Activated naive CD4-positive, alpha-beta T cell treated with anti-CD3 and anti-CD28 coated beads for 36 hours (primary cell): ENCODE measurements at regions of chr2 and their contacts with region 1.

Region 1: GRCh38 chr2:113889471-113890252 is at the start of gene ACTR3:
- DNase-seq: peak; percentile 99
- H3K4me3 Mint-ChIP-seq: peak within 1 kb of the TSS; percentile 95
- H3K27ac Mint-ChIP-seq: peak within 1 kb of the TSS; percentile 98
- H3K4me1 Mint-ChIP-seq: peaks cover 64% of the 10 kb centered on the region
- H3K27me3 Mint-ChIP-seq: no peaks in the 10 kb centered on the region
- total RNA-seq, gene ACTR3: 516 to 536 TPM

Region 2: DNA sequence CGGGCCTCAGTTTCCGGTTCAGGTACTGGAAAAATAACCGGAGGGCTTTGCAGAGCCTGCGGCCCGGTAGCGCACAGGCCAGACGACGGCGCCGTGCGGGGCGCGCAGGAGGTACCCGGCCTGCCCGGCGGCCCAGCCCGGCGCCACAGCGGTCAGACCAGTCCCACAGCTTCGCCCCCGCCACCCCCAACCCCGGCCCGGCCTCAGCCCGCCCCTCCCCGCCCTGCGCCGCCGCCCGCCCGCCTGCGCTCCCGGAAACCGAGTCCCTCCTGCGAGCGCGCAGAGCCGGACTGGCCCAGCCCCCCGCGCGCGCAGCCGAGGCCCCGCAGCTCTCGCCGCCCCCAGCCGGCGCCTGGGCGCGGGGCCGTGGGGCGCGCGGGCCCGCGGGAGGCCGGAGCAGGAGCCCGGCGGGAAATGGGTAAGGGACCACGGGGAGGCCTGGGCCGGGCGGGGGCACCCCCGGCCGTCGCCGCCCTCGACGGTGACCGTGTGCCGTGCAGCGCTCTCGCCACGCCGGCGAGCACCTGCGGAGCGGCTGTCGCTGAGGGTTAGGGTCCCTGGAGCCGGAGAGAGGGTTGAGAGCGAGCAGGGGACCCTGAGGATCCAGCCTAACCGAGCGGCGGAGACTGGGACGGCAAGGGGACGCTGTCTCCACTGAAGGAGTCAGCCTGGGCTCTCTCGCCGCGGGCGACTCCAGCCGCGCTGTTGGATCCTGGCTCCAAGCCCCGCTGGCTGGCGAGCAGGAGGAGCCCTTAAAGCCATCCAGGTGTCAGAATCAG is 732.4 kb before region 1 on chr2:
- CTCF ChIA-PET with region 1: no interaction called
- intact Hi-C with region 1: no loop called
- DNase-seq: peak; percentile 67
- H3K4me3 Mint-ChIP-seq: peak overlapping the region; percentile 82
- H3K27ac Mint-ChIP-seq: peak overlapping the region; percentile 86
- H3K4me1 Mint-ChIP-seq: peaks cover 23% of the 10 kb centered on the region
- H3K27me3 Mint-ChIP-seq: no peaks in the 10 kb centered on the region

Region 3: DNA sequence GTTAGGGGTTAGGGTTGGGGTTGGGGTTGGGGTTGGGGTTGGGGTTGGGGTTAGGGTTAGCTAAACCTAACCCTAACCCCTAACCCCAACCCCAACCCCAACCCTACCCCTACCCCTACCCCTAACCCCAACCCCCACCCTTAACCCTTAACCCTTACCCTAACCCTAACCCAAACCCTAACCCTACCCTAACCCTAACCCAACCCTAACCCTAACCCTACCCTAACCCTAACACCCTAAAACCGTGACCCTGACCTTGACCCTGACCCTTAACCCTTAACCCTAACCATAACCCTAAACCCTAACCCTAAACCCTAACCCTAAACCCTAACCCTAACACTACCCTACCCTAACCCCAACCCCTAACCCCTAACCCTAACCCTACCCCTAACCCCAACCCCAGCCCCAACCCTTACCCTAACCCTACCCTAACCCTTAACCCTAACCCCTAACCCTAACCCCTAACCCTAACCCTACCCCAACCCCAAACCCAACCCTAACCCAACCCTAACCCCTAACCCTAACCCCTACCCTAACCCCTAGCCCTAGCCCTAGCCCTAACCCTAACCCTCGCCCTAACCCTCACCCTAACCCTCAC is 286.7 kb before region 1 on chr2:
- CTCF ChIA-PET with region 1: interaction called, 3 read pairs
- intact Hi-C with region 1: loop called (anchors 10 kb)
- DNase-seq: no peak
- H3K4me3 Mint-ChIP-seq: peak overlapping the region; percentile 93
- H3K27ac Mint-ChIP-seq: peak overlapping the region; percentile 84
- H3K4me1 Mint-ChIP-seq: peaks cover 9% of the 10 kb centered on the region
- H3K27me3 Mint-ChIP-seq: no peaks in the 10 kb centered on the region

Region 4: GRCh38 chr2:113756355-113757137 is 133.1 kb before region 1 on chr2 and contains the start of gene SLC35F5:
- CTCF ChIA-PET with region 1: interaction called, 3 read pairs
- intact Hi-C with region 1: loop called (anchors 1 kb)
- DNase-seq: peak; percentile 89
- H3K4me3 Mint-ChIP-seq: peak within 1 kb of the TSS; percentile 98
- H3K27ac Mint-ChIP-seq: peak within 1 kb of the TSS; percentile 99
- H3K4me1 Mint-ChIP-seq: peaks cover 17% of the 10 kb centered on the region
- H3K27me3 Mint-ChIP-seq: no peaks in the 10 kb centered on the region
- total RNA-seq, gene SLC35F5: 12.1 to 13.7 TPM

Region 5: DNA sequence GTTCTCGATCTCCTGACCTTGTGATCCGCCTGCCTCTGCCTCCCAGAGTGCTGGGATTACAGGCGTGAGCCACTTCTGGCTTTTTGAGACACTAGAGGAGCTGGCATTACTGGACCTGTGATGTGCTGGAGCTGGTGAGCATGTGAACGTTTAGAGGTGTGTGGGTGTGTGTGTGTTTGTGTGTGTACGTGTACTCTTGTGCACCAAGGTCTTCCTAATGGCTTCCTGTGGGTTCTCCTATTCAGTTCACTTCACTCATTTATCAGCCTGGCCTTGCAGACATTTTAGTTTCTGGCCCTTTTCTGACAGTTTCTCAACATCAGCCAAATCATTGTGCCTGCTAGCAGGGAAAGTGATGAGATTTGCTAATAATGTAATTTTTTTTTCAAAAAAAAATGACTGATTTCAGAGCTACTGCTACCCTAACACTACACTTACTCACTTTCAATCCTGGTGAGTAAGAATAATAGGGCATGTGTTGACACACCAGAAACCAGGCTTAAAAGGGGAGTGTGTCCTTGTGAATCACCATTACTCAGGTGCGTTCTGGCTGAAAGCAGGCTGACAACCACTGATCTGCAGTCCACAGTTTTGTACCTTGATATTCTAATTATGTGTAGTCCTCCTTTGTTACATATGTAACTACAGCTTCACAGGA is 40.8 kb before region 1 on chr2:
- CTCF ChIA-PET with region 1: no interaction called
- intact Hi-C with region 1: loop called (anchors 1 kb)
- DNase-seq: peak; percentile 73
- H3K4me3 Mint-ChIP-seq: no peak overlapping the region
- H3K27ac Mint-ChIP-seq: peak overlapping the region; percentile 88
- H3K4me1 Mint-ChIP-seq: peaks cover 22% of the 10 kb centered on the region
- H3K27me3 Mint-ChIP-seq: no peaks in the 10 kb centered on the region

Region 6: GRCh38 chr2:113901943-113902342 is 12.3 kb after region 1 on chr2:
- CTCF ChIA-PET with region 1: interaction called, 5 read pairs
- intact Hi-C with region 1: loop called (anchors 1 kb)
- DNase-seq: no peak
- H3K4me3 Mint-ChIP-seq: no peak overlapping the region
- H3K27ac Mint-ChIP-seq: peak overlapping the region; percentile 67
- H3K4me1 Mint-ChIP-seq: peaks cover 91% of the 10 kb centered on the region
- H3K27me3 Mint-ChIP-seq: no peaks in the 10 kb centered on the region

Region 7: DNA sequence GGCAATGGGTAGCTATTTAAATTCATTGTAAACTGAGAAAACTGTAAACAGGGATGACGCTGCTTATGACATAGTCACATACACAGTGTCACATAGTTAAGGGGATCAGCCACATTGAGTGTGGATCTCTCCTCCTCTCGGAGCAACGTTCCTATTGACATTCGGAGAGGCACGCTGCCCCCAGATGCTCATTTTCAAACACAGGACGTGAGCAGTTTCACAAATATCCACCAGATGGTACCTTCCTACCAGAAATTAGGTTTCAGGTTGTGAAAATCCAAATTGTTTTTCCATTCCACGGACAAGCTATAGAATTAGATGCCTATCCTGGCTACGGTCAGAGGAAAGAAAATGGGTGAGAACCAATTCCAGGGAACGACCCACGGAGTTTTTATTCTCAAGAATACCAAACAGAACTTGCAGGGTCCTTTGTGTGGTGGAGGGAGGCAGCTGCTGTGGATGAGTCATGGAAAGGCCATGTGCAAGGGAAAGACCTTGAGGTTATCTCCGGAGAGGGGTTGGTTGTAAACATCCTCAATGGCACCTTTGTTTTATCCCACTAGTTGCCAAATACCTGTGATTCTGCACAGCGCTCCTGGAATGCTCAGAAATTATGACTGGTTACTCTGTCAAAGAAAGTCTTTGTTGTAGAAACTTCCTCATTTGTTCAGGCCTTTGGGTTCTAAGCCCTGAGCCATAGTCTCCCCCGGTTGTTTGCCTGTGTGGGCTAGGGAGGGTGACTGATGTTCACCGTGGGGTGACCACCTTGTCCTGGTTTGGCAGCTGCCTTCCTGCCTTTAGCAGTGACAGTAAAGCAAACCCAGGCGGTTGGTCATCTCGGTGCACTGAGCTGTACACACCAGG is 88.2 kb after region 1 on chr2:
- CTCF ChIA-PET with region 1: interaction called, 4 read pairs
- intact Hi-C with region 1: loop called (anchors 1 kb)
- DNase-seq: no peak
- H3K4me3 Mint-ChIP-seq: no peak overlapping the region
- H3K27ac Mint-ChIP-seq: no peak overlapping the region
- H3K4me1 Mint-ChIP-seq: no peaks in the 10 kb centered on the region
- H3K27me3 Mint-ChIP-seq: no peaks in the 10 kb centered on the region